ENCODE measurements at regions of chr9 and their contacts with region 1.

Region 1: GRCh38 chr9:97921959-97922724 is at the start of gene TRMO:
- DNase-seq: peak; percentile 98
- H3K4me3 Mint-ChIP-seq: peak within 1 kb of the TSS; percentile 86
- H3K27ac Mint-ChIP-seq: peak within 1 kb of the TSS; percentile 97
- H3K4me1 Mint-ChIP-seq: peaks cover 35% of the 10 kb centered on the region
- H3K27me3 Mint-ChIP-seq: peaks cover 5% of the 10 kb centered on the region
- total RNA-seq, gene TRMO: 10.7 to 10.8 TPM

Region 2: DNA sequence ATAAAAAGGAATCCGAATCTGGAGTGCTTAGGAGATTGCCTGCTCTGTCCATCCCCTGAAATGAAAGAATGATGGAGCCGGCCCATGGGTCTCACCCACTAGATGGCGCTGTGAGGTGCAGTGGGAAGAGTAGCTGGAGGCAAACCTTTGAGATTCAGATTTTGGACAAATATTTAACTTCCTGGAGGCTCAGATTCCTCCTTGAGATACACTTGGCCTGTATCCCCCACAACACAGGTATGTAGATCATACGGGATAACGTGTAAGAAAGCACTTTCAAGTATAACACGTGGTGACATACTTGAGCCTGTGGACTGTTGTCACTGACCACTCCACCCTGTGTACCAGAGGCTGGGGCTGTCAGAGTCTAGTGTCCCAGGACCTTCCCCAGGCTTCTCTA is 32.1 kb before region 1 on chr9:
- CTCF ChIA-PET with region 1: interaction called, 27 read pairs
- intact Hi-C with region 1: loop called (anchors 1 kb)
- DNase-seq: peak; percentile 86
- H3K4me3 Mint-ChIP-seq: no peak overlapping the region
- H3K27ac Mint-ChIP-seq: no peak overlapping the region
- H3K4me1 Mint-ChIP-seq: peaks cover 16% of the 10 kb centered on the region
- H3K27me3 Mint-ChIP-seq: no peaks in the 10 kb centered on the region

Region 3: DNA sequence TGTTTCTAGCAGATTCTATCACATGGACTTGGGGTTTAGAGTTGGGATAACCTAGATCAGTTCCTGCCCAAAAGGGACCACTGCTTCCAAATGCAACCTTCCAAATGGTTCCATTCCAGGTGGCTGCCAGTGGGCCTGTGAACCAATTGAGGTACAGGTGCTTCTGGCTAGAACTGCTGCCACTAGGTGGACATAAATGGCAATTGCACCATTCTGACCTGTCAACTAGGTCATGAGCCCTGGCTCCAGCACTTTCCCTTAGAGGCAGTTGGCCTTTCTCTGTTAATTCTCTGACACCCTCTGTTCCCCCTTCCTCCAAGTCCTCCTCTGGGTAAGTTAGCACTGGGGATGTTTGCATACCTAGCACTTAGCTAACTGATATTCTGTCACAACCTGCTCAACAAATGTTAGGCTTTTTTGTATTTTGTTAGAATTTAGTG is 32.4 kb after region 1 on chr9:
- CTCF ChIA-PET with region 1: interaction called, 66 read pairs
- intact Hi-C with region 1: loop called (anchors 1 kb)
- DNase-seq: peak; percentile 75
- H3K4me3 Mint-ChIP-seq: no peak overlapping the region
- H3K27ac Mint-ChIP-seq: no peak overlapping the region
- H3K4me1 Mint-ChIP-seq: no peaks in the 10 kb centered on the region
- H3K27me3 Mint-ChIP-seq: no peaks in the 10 kb centered on the region

Region 4: GRCh38 chr9:98034593-98035546 is 112.7 kb after region 1 on chr9:
- CTCF ChIA-PET with region 1: interaction called, 23 read pairs
- intact Hi-C with region 1: loop called (anchors 1 kb)
- DNase-seq: peak; percentile 97
- H3K4me3 Mint-ChIP-seq: peak overlapping the region; percentile 33
- H3K27ac Mint-ChIP-seq: no peak overlapping the region
- H3K4me1 Mint-ChIP-seq: peaks cover 15% of the 10 kb centered on the region
- H3K27me3 Mint-ChIP-seq: no peaks in the 10 kb centered on the region

Region 5: GRCh38 chr9:98081477-98082219 is 159.5 kb after region 1 on chr9:
- CTCF ChIA-PET with region 1: no interaction called
- intact Hi-C with region 1: no loop called
- DNase-seq: peak; percentile 78
- H3K4me3 Mint-ChIP-seq: no peak overlapping the region
- H3K27ac Mint-ChIP-seq: peak overlapping the region; percentile 88
- H3K4me1 Mint-ChIP-seq: peaks cover 41% of the 10 kb centered on the region
- H3K27me3 Mint-ChIP-seq: no peaks in the 10 kb centered on the region

Region 6: DNA sequence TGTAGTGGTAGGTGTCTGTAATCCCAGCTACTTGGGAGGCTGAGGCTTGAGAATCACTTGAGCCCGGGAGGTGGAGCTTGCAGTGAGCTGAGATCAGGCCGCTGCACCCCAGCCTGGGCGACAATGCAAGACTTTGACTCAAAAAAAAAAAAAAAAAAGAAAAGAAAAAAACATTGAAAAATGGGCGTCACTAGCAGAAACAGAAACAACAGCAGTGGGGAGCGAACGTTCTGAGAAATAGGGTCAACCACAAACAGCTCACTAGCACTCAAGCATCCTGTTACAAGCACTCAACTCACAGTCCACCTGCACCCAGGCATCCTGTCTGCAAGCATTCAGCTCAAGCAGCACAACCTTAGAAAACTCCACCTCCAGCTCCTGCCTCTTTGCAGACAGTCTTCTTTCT is 179.7 kb after region 1 on chr9:
- CTCF ChIA-PET with region 1: no interaction called
- intact Hi-C with region 1: loop called (anchors 1 kb)
- DNase-seq: peak; percentile 90
- H3K4me3 Mint-ChIP-seq: peak overlapping the region; percentile 65
- H3K27ac Mint-ChIP-seq: peak overlapping the region; percentile 96
- H3K4me1 Mint-ChIP-seq: peaks cover 83% of the 10 kb centered on the region
- H3K27me3 Mint-ChIP-seq: no peaks in the 10 kb centered on the region

Region 7: GRCh38 chr9:98255578-98256296 is 333.6 kb after region 1 on chr9 and contains the start of gene TBC1D2:
- CTCF ChIA-PET with region 1: interaction called, 14 read pairs
- intact Hi-C with region 1: loop called (anchors 1 kb)
- DNase-seq: peak; percentile 98
- H3K4me3 Mint-ChIP-seq: peak within 1 kb of the TSS; percentile 86
- H3K27ac Mint-ChIP-seq: peak within 1 kb of the TSS; percentile 97
- H3K4me1 Mint-ChIP-seq: peaks cover 25% of the 10 kb centered on the region
- H3K27me3 Mint-ChIP-seq: peaks cover 2% of the 10 kb centered on the region
- total RNA-seq, gene TBC1D2: 2.4 to 2.5 TPM